Pancreas (tissue), 10 donors: ENCODE measurements at regions of chr19 and their contacts with region 1.

Region 1: GRCh38 chr19:39818626-39819097 is 15.3 kb downstream of the DYRK1B start:
- DNase-seq: no peak
- ATAC-seq: no peak
- H3K4me3 ChIP-seq: no peak overlapping the region
- H3K27ac ChIP-seq: no peak overlapping the region
- H3K4me1 ChIP-seq: peaks cover 0 to 1% (median 0%) of the 10 kb centered on the region in 3 donors
- H3K27me3 ChIP-seq: no peaks in the 10 kb centered on the region
- CTCF ChIP-seq: no peak

Region 2: DNA sequence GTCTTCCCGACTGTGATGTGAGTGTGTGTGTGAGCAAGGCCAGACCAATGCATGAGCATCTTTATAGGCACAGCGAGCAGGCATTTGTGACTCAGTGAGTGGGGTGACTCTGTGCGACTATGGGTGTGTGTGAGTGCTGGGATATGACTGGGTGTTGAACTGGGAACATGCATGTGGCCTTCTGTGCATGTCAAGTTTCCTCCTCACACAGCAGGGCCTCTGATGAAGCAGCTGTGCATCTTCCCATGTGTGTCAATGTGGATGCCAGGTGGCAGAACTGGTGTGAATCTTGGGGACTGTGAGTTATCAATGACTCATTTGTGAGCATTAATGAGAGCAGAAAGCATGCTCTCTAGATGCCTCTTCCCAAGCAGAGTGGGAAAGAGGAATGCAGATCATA is 126.5 kb before region 1 on chr19:
- intact Hi-C with region 1: no loop called
- DNase-seq: peak in 3 of 6 donors; percentile 29 to 67 (median 44)
- ATAC-seq: peak in 2 of 4 donors; percentile 18 to 71
- H3K4me3 ChIP-seq: no peak overlapping the region
- H3K27ac ChIP-seq: no peak overlapping the region
- H3K4me1 ChIP-seq: no peaks in the 10 kb centered on the region
- H3K27me3 ChIP-seq: no peaks in the 10 kb centered on the region
- CTCF ChIP-seq: no peak

Region 3: DNA sequence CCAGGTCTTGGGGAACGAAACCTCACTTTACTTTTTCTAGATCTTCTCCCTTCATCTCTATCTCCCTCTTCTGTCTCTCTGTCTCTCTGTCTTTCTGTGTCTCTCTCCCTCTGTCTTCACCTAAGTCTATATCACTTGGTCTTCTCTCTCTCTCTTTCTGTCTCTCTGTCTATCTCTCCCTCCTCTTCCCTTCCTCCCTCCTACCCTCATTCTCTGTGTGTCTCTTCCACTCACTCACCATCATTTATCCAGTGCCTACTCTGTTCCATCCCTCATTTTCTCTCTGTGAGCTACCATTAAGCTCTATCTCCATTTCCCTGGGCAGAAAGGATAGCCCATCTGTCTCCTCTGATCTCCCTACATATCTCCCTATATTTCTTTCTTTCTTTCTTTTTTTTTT is 59.7 kb after region 1 on chr19:
- intact Hi-C with region 1: loop called in 1 of 3 experiments (anchors 5 kb)
- DNase-seq: no peak
- ATAC-seq: no peak
- H3K4me3 ChIP-seq: no peak overlapping the region
- H3K27ac ChIP-seq: no peak overlapping the region
- H3K4me1 ChIP-seq: no peaks in the 10 kb centered on the region
- H3K27me3 ChIP-seq: no peaks in the 10 kb centered on the region
- CTCF ChIP-seq: no peak